HepG2 (cell line): ENCODE measurements at regions of chr15 and their contacts with region 1.

Region 1: GRCh38 chr15:51380999-51381795 is 39.7 kb downstream of the GLDN start:
- DNase-seq: peak; percentile 77
- ATAC-seq: peak; percentile 95
- H3K4me3 ChIP-seq: no peak overlapping the region
- H3K27ac ChIP-seq: no peak overlapping the region
- H3K4me1 ChIP-seq: no peaks in the 10 kb centered on the region
- H3K27me3 ChIP-seq: no peaks in the 10 kb centered on the region; a peak in 1 of 5 replicates
- CTCF ChIP-seq: peak; percentile 98
- EP300 ChIP-seq: no peak
- POLR2A ChIP-seq: no peak
- RAD21 ChIP-seq: peak; percentile 98

Region 2: GRCh38 chr15:51162865-51163762 is 218.1 kb before region 1 on chr15:
- CTCF ChIA-PET with region 1: interaction called, 41 read pairs
- POLR2A ChIA-PET with region 1: no interaction called
- in situ Hi-C with region 1: no loop called
- intact Hi-C with region 1: loop called (anchors 1 kb)
- DNase-seq: peak; percentile 45
- ATAC-seq: peak; percentile 96
- H3K4me3 ChIP-seq: no peak overlapping the region
- H3K27ac ChIP-seq: no peak overlapping the region
- H3K4me1 ChIP-seq: no peaks in the 10 kb centered on the region
- H3K27me3 ChIP-seq: no peaks in the 10 kb centered on the region
- CTCF ChIP-seq: peak; percentile 84
- EP300 ChIP-seq: no peak
- POLR2A ChIP-seq: no peak
- RAD21 ChIP-seq: peak; percentile 69; the same call in 1 of the 2 replicates

Region 3: DNA sequence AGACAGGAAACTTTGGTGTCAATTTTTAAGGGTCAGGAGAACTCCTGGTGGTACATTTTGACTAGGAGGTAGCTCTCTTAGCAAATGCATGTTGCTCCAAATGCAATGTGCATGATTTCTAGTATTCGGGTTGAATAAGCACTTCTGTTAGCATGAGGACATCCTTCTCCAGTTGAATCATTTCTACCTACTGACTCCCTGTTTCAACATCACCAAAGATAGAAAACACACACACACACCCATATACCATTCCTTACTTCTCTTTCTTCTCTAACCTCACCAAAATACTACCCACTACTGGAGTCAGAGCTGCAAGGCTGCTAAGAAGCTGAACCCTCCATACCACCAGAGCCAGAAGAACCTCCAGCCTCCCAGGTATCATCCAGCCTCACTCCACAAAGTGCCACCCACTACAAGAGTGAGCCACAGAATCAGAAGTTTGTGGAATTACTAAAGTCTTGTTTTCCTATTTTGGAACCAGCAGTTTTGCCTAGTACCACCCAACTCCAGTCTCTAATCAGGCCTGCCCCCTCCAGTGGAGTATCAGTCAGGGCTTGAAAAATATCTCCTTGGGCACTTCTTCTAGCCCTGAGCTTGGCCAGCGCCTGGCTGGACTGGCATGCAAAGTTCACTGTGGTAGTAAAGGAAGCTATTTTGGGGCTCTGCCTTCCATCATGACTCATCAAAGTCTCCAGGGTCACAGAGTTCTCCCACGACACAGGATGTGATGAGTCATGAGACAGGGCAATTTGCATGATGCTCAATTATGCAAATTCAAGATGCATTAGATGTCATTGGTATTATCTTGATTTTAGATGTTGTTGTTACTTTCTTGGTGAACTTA is 153.0 kb before region 1 on chr15:
- CTCF ChIA-PET with region 1: interaction called, 12 read pairs
- POLR2A ChIA-PET with region 1: no interaction called
- in situ Hi-C with region 1: no loop called
- intact Hi-C with region 1: loop called (anchors 2 kb)
- DNase-seq: peak; percentile 24
- ATAC-seq: no peak
- H3K4me3 ChIP-seq: no peak overlapping the region
- H3K27ac ChIP-seq: no peak overlapping the region
- H3K4me1 ChIP-seq: peaks cover 14% of the 10 kb centered on the region
- H3K27me3 ChIP-seq: no peaks in the 10 kb centered on the region
- CTCF ChIP-seq: no peak
- EP300 ChIP-seq: no peak
- POLR2A ChIP-seq: no peak
- RAD21 ChIP-seq: no peak

Region 4: GRCh38 chr15:51281368-51281967 is 99.7 kb before region 1 on chr15:
- CTCF ChIA-PET with region 1: interaction called, 109 read pairs
- POLR2A ChIA-PET with region 1: no interaction called
- in situ Hi-C with region 1: loop called (anchors 5 kb)
- intact Hi-C with region 1: loop called (anchors 1 kb)
- DNase-seq: peak; percentile 44
- ATAC-seq: peak; percentile 98
- H3K4me3 ChIP-seq: no peak overlapping the region
- H3K27ac ChIP-seq: no peak overlapping the region
- H3K4me1 ChIP-seq: peaks cover 23% of the 10 kb centered on the region
- H3K27me3 ChIP-seq: no peaks in the 10 kb centered on the region
- CTCF ChIP-seq: peak; percentile 92
- EP300 ChIP-seq: no peak
- POLR2A ChIP-seq: no peak
- RAD21 ChIP-seq: peak; percentile 90

Region 5: GRCh38 chr15:51286791-51287190 is 94.4 kb before region 1 on chr15:
- CTCF ChIA-PET with region 1: interaction called, 109 read pairs
- POLR2A ChIA-PET with region 1: no interaction called
- in situ Hi-C with region 1: loop called (anchors 5 kb)
- intact Hi-C with region 1: loop called (anchors 1 kb)
- DNase-seq: peak; percentile 15
- ATAC-seq: peak; percentile 33; the same call in 2 of the 3 replicates
- H3K4me3 ChIP-seq: no peak overlapping the region
- H3K27ac ChIP-seq: no peak overlapping the region
- H3K4me1 ChIP-seq: peaks cover 53% of the 10 kb centered on the region
- H3K27me3 ChIP-seq: no peaks in the 10 kb centered on the region
- CTCF ChIP-seq: peak; percentile 44
- EP300 ChIP-seq: no peak
- POLR2A ChIP-seq: no peak
- RAD21 ChIP-seq: peak; percentile 39; the same call in 1 of the 2 replicates

Region 6: DNA sequence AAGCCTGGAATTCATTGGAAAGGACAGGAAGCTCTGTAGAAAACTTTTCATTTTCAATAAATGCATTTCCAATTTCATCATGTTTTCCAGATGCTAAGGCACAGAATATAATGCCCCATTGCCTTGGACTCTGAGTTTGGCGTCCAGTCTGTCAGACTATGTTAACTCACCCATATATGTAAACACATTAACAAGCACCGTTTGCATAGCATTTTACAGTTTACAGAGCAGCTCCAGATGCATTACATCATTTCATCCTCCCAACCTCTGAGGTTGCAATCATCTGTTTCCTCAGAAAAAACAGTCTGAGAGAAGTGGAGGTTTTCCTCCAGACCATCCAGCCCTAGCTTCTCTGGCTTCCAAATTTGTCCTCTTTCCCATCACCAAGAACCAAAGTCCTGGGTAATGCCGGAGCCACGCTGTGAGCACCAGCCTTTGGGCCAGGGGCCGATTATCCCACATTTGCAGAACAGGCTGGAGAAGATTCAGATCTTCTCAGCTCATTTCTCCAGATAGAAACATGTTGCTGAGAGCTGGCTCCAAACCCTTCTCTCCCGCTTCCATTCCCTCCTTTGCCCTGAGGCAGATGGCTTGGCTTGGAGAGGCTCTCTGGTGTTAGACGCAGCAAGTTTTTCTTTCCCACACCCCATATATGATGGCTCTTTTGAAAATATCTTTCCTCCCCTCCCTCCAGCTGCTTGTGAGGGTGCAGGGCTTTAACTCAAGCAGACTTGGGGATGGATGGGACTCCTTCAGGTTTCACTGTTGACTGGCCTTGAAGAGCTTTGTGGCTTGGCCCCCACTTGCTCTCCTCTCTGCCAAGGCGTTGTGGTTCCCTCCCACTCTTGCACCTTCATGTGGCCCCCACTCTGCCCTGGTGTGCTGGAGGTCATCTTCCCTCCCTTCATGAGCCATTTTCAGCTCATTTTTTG is 68.8 kb before region 1 on chr15:
- CTCF ChIA-PET with region 1: interaction called, 3 read pairs
- POLR2A ChIA-PET with region 1: no interaction called
- in situ Hi-C with region 1: no loop called
- intact Hi-C with region 1: loop called (anchors 1 kb)
- DNase-seq: peak; percentile 89
- ATAC-seq: peak; percentile 70
- H3K4me3 ChIP-seq: peak overlapping the region; percentile 14 to 50 (median 14); a peak in 3 of 6 replicates
- H3K27ac ChIP-seq: peak overlapping the region; percentile 91
- H3K4me1 ChIP-seq: peaks cover 82% of the 10 kb centered on the region
- H3K27me3 ChIP-seq: no peaks in the 10 kb centered on the region
- CTCF ChIP-seq: no peak
- EP300 ChIP-seq: peak in 1 of 2 experiments; percentile 81; a peak in 3 of 4 replicates
- POLR2A ChIP-seq: no peak
- RAD21 ChIP-seq: no peak

Region 7: DNA sequence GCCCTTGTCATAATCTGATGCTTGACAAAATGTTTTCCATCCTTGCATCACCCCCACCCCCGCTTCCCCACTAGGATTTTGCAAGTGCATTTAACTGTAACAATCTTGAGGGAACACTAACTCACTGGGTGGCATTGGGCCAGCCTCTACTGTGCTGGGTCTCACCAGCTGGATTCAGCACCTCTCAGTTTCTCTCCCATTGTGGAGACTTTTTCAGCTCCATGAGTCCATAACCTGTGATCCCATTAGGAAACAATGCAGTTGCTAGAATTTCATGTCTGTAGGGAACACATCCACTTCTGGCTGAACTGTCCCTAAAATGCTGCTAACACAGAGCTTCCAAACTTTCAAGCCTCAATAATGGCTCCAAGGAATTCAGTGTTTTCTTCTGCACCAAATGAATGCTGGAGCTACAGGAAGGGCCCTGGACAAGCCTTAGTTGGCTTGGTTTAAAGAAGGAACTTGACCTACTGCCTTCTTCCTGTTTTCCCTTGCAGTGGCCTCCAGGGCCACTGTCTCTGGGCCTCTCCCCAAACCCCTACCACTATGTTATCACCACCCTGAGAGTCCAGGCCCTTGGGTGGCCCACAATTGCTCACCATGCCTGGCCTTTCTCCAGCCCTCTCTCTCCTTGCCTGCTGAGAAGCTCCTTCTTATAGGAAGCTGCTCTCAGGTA is 58.4 kb before region 1 on chr15:
- CTCF ChIA-PET with region 1: no interaction called
- POLR2A ChIA-PET with region 1: no interaction called
- in situ Hi-C with region 1: no loop called
- intact Hi-C with region 1: no loop called
- DNase-seq: no peak
- ATAC-seq: no peak
- H3K4me3 ChIP-seq: no peak overlapping the region
- H3K27ac ChIP-seq: no peak overlapping the region
- H3K4me1 ChIP-seq: peaks cover 38% of the 10 kb centered on the region
- H3K27me3 ChIP-seq: no peaks in the 10 kb centered on the region
- CTCF ChIP-seq: no peak
- EP300 ChIP-seq: no peak
- POLR2A ChIP-seq: no peak
- RAD21 ChIP-seq: no peak

Region 8: GRCh38 chr15:51499379-51499976 is 118.3 kb after region 1 on chr15:
- CTCF ChIA-PET with region 1: no interaction called
- POLR2A ChIA-PET with region 1: no interaction called
- in situ Hi-C with region 1: no loop called
- intact Hi-C with region 1: loop called (anchors 5 kb)
- DNase-seq: peak; percentile 43
- ATAC-seq: peak; percentile 81
- H3K4me3 ChIP-seq: no peak overlapping the region
- H3K27ac ChIP-seq: no peak overlapping the region
- H3K4me1 ChIP-seq: peaks cover 7% of the 10 kb centered on the region
- H3K27me3 ChIP-seq: no peaks in the 10 kb centered on the region
- CTCF ChIP-seq: peak; percentile 80
- EP300 ChIP-seq: no peak
- POLR2A ChIP-seq: no peak
- RAD21 ChIP-seq: no peak; the same call in 1 of the 2 replicates